Calu3 (cell line): ENCODE measurements at regions of chr1 and their contacts with region 1.

Region 1: DNA sequence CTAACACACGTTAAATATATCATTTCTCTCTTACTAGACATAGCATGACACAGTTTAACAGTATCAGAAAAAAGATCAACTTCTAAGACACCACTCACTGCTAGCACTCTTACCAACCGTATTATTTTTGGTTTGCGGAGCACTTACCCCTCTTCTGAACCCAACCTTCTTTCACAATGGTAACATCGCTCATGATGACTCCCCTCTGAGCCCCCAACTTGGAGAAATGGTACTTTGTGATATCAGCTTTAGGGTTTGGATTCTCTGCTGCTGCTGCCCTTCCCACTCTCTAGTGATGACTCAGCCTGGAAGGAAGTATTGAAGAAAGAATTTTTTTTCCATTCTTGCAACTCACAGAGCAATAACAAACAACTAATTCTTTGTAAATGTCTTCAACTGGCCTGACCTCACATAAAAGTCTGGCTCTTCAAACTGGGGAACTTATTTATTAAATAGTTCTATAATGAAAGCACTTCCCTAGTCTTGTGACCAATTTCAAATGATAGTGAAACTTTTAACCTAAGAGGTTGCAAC is 7.0 kb downstream of the AKT3 start:
- DNase-seq: peak; percentile 43
- H3K4me3 Mint-ChIP-seq: peak overlapping the region; percentile 69
- H3K27ac Mint-ChIP-seq: peak overlapping the region; percentile 97
- H3K4me1 Mint-ChIP-seq: peaks cover 36% of the 10 kb centered on the region
- H3K27me3 Mint-ChIP-seq: no peaks in the 10 kb centered on the region
- CTCF ChIP-seq: no peak

Region 2: DNA sequence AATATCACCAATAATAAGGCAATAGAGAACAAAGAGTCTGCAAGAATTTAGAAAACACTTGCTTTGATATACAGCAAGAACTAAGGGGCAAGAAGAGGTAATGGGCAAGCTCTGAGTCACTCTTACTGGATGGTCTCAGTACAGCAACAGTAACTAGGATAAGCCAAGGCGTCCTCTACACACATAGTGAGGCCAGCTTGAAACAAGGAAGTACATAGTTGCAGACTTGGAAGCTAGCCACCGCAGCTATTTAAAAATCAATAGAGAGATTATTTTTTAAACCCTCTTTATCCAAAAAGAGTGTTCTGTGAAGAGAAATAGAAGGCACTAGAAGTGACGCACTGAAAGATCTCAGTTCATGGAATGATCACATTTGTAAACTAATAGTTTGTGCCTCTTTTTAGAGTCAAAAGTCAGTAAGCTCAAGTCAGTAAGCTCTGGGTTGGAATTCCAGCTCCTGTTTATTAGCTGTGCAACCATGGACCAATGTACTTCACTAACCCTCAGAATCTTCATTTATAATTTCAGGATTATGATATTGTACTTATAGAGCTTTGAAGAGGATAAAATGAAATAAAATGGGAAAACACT is 111.6 kb before region 1 on chr1:
- CTCF ChIA-PET with region 1: no interaction called
- intact Hi-C with region 1: loop called (anchors 1 kb)
- DNase-seq: peak; percentile 82
- H3K4me3 Mint-ChIP-seq: peak overlapping the region; percentile 76
- H3K27ac Mint-ChIP-seq: peak overlapping the region; percentile 99
- H3K4me1 Mint-ChIP-seq: peaks cover 46% of the 10 kb centered on the region
- H3K27me3 Mint-ChIP-seq: no peaks in the 10 kb centered on the region
- CTCF ChIP-seq: no peak

Region 3: DNA sequence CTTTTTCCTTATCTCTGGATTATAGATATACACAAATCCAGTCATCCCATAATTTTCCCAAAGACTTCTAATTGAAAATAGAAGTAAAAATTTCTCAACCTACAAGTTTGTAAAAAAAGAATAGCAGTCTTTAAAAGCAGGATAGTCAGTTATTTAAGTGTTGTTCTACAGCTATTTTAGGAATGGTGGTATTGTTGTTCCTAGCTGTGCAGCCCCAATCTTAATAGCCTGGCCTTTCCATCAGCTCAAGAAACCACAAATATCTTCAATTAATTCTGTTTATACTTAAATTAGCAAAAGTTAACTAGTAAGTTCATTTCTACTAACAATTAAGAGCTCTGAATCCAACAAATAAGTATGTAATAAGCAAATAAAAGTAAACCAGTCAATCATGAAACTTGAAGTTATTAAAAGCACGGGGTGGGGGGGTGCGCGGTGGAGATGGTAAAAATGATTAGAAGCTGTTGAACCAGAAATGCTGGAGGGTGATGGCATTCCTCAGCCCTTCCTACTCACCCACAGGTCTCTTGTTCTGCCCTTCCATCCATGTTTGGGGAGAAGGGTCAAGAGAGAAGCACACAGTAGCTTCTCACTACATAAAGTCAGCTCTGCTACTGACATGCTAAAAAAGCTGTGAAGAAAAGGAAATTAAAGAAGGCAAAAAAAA is 56.6 kb before region 1 on chr1:
- CTCF ChIA-PET with region 1: no interaction called
- intact Hi-C with region 1: no loop called
- DNase-seq: peak; percentile 18
- H3K4me3 Mint-ChIP-seq: no peak overlapping the region
- H3K27ac Mint-ChIP-seq: peak overlapping the region; percentile 57
- H3K4me1 Mint-ChIP-seq: peaks cover 22% of the 10 kb centered on the region
- H3K27me3 Mint-ChIP-seq: no peaks in the 10 kb centered on the region
- CTCF ChIP-seq: no peak

Region 4: GRCh38 chr1:244239261-244239770 is 396.3 kb after region 1 on chr1:
- CTCF ChIA-PET with region 1: no interaction called
- intact Hi-C with region 1: no loop called
- DNase-seq: no peak
- H3K4me3 Mint-ChIP-seq: no peak overlapping the region
- H3K27ac Mint-ChIP-seq: no peak overlapping the region
- H3K4me1 Mint-ChIP-seq: peaks cover 18% of the 10 kb centered on the region
- H3K27me3 Mint-ChIP-seq: no peaks in the 10 kb centered on the region
- CTCF ChIP-seq: no peak